ENCODE measurements at regions of chr10 and their contacts with region 1.

Region 1: DNA sequence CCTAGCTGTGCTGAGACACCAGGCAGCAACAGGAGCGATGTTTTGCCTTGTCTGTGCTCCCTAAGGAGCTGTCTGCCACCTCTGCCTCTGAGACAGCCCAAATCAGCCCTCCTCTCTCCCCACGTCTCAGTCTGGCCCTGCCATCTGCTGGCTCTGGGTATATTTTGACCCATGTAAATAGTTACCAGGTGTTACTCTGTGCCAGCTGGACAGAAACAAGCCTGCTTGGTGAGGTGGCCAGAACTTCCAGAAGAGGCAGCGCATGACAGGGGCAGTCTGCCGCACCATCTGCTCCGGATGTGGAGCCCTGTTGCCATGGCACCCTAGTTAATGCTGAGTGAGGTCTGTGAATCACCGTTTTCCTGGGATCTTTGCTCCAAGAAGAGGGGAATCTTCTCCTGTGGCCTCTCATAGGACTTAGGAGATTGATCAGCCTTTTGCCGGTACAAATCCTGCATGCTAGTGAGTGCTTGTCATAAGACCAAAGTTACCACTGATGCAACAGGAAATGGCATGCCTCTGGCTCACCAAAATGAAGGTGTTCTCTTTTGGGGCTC is 31.8 kb downstream of the GSTO2 start:
- DNase-seq: peak in 2 of 3 donors; percentile 36 to 74
- H3K4me3 ChIP-seq: no peak overlapping the region
- H3K4me3 Mint-ChIP-seq: no peak overlapping the region
- H3K27ac ChIP-seq: no peak overlapping the region
- H3K27ac Mint-ChIP-seq: peak overlapping the region in 2 of 7 donors; percentile 8 to 11
- H3K4me1 ChIP-seq: peaks cover 28 to 29% of the 10 kb centered on the region in 2 donors
- H3K4me1 Mint-ChIP-seq: peaks cover 41% of the 10 kb centered on the region
- H3K27me3 ChIP-seq: no peaks in the 10 kb centered on the region
- H3K27me3 Mint-ChIP-seq: peaks cover 2 to 10% (median 8%) of the 10 kb centered on the region in 3 donors
- CTCF ChIP-seq: no peak

Region 2: GRCh38 chr10:104580774-104581675 is 280.2 kb after region 1 on chr10:
- intact Hi-C with region 1: loop called in 1 of 2 experiments (anchors 10 kb)
- DNase-seq: peak; percentile 41 to 60 (median 56)
- H3K4me3 ChIP-seq: no peak overlapping the region
- H3K4me3 Mint-ChIP-seq: peak overlapping the region in 1 of 2 donors; percentile 44
- H3K27ac ChIP-seq: no peak overlapping the region
- H3K27ac Mint-ChIP-seq: peak overlapping the region in 1 of 7 donors; percentile 39
- H3K4me1 ChIP-seq: no peaks in the 10 kb centered on the region
- H3K4me1 Mint-ChIP-seq: no peaks in the 10 kb centered on the region
- H3K27me3 ChIP-seq: peaks cover 0 to 5% of the 10 kb centered on the region in 2 donors
- H3K27me3 Mint-ChIP-seq: peaks cover 14 to 20% (median 20%) of the 10 kb centered on the region in 3 donors
- CTCF ChIP-seq: peak; percentile 91